Endothelial cell of umbilical vein (primary cell): ENCODE measurements at regions of chr4 and their contacts with region 1.

Region 1: DNA sequence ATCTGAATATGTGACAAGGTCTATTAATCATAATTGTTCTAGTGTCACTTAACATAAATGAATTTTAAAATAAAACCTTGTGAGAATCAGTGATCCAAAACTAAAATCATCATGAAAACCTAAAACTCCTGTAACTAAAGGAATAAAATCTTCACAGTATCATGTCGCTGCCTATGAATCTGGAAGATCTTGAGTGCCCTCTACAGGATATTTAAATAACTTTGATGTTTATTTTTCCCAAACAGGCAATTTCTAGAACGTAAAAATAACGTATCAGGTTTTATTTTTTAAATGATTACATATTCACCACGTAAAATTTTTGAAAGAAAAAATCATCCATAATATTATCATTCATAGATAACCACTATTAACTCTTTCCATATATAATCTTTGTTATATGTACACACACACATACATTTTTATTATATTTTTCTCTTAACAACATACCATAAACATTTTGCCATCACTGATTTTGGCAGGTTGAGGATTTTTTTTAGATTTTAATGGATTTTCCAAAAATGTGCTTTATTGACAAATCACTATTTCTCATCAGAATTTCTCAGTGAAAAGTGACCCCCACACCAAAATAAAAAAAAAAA is 79.6 kb downstream of the COMMD8 start:
- DNase-seq: peak; percentile 28
- H3K4me3 ChIP-seq: no peak overlapping the region
- H3K27ac ChIP-seq: no peak overlapping the region
- H3K4me1 ChIP-seq: no peaks in the 10 kb centered on the region
- H3K27me3 ChIP-seq: no peaks in the 10 kb centered on the region
- CTCF ChIP-seq: peak; percentile 13 to 20
- POLR2A ChIP-seq: no peak

Region 2: DNA sequence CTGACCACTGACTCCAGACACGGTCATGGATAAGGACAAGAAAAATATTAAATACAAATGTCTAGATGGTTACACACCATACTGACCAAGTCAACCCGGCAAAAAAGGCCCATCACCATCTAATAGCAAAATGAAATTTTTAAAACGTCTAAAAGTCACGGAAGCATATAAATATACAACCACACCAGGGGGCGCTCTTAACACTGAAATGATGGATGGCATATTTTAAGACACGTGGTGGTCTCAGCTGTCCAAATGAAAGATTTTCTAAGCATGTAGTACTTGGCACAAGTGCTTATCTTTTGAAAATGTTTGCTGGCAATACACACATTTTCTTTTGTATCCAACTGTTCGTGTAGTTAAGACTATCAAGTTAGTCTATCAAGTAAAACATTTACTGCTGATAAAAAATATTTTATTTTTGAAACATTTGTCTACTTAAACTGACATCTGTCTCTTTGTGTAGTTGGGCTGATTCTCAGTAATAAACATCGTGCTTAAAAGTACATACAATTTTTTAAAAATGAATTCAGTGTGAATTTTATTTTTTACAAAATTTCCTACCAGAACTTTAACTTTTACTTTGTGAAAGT is 539.5 kb before region 1 on chr4:
- CTCF ChIA-PET with region 1: interaction called, 29 read pairs
- POLR2A ChIA-PET with region 1: no interaction called
- dilution Hi-C with region 1: no loop called
- intact Hi-C with region 1: loop called (anchors 1 kb)
- DNase-seq: peak; percentile 64
- H3K4me3 ChIP-seq: no peak overlapping the region
- H3K27ac ChIP-seq: no peak overlapping the region
- H3K4me1 ChIP-seq: no peaks in the 10 kb centered on the region
- H3K27me3 ChIP-seq: no peaks in the 10 kb centered on the region
- CTCF ChIP-seq: peak; percentile 53 to 55
- POLR2A ChIP-seq: no peak

Region 3: GRCh38 chr4:46931981-46932380 is 451.9 kb before region 1 on chr4:
- CTCF ChIA-PET with region 1: interaction called, 12 read pairs
- POLR2A ChIA-PET with region 1: no interaction called
- dilution Hi-C with region 1: no loop called
- intact Hi-C with region 1: loop called (anchors 1 kb)
- DNase-seq: peak; percentile 35
- H3K4me3 ChIP-seq: no peak overlapping the region
- H3K27ac ChIP-seq: no peak overlapping the region
- H3K4me1 ChIP-seq: no peaks in the 10 kb centered on the region
- H3K27me3 ChIP-seq: peaks cover 0 to 9% of the 10 kb centered on the region in 2 experiments
- CTCF ChIP-seq: peak; percentile 47 to 65
- POLR2A ChIP-seq: no peak

Region 4: GRCh38 chr4:46937493-46937892 is 446.4 kb before region 1 on chr4:
- CTCF ChIA-PET with region 1: interaction called, 12 read pairs
- POLR2A ChIA-PET with region 1: no interaction called
- dilution Hi-C with region 1: no loop called
- intact Hi-C with region 1: loop called (anchors 1 kb)
- DNase-seq: peak; percentile 6
- H3K4me3 ChIP-seq: no peak overlapping the region
- H3K27ac ChIP-seq: no peak overlapping the region
- H3K4me1 ChIP-seq: no peaks in the 10 kb centered on the region
- H3K27me3 ChIP-seq: no peaks in the 10 kb centered on the region
- CTCF ChIP-seq: peak in 1 of 2 donors; percentile 1
- POLR2A ChIP-seq: no peak